ENCODE measurements at regions of chr4 and their contacts with region 1.

Region 1: DNA sequence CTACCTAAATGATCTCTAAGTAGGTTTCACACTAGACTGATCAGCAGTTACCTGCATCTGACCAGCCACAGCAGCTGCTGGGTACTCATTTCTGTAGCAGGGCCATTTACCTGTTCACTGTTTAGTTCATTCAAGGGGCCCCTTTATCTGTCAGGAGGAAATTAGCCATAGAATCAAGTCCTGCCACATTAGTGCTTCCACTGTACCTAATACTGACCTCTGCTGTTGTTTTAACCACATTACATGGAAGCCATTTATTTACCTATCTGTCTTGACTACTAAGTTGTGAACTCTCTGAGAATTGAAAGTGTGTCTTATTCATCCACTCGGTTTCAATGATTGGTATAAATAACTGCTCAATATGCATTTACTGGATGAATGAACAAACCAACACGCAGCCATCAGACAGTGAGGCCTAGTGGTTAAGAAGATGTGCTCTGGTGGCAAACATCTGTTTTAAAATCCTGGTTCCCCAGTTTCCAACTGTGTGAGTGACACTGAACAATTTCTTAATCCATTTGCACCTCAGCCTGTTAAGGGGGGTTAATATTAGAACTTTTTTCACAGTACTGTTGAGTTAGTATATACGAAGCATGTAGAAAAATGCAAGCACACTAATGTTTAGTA is 30.0 kb upstream of the ANXA5 start:
- DNase-seq: no peak
- ATAC-seq: peak; percentile 64
- H3K4me3 Mint-ChIP-seq: no peak overlapping the region
- H3K27ac Mint-ChIP-seq: no peak overlapping the region
- H3K4me1 Mint-ChIP-seq: no peaks in the 10 kb centered on the region
- H3K27me3 Mint-ChIP-seq: peaks cover 13% of the 10 kb centered on the region
- CTCF ChIP-seq: no peak

Region 2: DNA sequence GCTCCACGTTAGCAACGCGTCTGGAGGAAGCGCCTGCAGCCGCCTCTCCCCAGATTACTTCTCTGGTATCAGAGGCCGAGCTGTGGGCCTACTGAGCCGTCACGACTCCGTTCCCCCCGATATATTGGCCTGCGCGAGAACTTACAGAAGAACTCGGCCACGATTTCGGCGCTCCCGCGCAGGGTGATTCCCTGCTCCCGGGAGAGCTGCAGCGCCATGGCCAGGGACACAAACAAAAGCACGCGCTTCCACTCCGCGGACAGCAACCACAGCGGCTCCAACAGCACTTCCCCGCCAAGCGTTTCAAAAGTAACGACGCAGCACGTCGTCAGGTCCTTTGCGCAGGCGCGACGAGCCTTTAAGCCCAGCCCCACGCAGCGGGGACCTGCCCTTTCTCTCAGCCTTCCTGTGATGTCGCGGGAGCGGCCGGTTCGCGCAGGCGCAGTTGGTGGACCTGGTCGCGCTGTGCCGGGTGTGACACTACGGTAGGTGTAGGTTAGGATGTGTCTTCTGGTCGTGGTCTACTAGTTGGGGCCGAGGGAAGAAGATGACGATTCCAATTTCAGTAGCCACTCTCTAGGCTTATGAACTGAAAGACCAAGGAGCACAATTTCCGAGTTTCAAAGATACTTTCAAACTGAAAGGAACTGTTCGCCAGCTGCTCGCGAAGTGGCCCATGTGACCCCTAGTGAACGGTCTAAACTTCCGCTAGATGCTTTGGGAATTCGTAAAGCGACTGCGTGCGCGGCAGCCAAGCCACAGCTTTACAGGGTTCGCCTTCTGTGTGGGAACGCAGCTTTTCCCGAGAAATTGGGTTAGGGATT is 1660.0 kb before region 1 on chr4 and contains the start of gene MAD2L1:
- CTCF ChIA-PET with region 1: no interaction called
- POLR2A ChIA-PET with region 1: no interaction called
- intact Hi-C with region 1: loop called (anchors 10 kb)
- DNase-seq: peak; percentile 95
- ATAC-seq: peak; percentile 94
- H3K4me3 Mint-ChIP-seq: peak within 1 kb of the TSS; percentile 99
- H3K27ac Mint-ChIP-seq: peak within 1 kb of the TSS; percentile 97
- H3K4me1 Mint-ChIP-seq: peaks cover 31% of the 10 kb centered on the region
- H3K27me3 Mint-ChIP-seq: no peaks in the 10 kb centered on the region
- CTCF ChIP-seq: no peak
- total RNA-seq, gene MAD2L1: 3.4 and 5.4 TPM in 2 replicates

Region 3: GRCh38 chr4:121192480-121192879 is 534.3 kb before region 1 on chr4:
- CTCF ChIA-PET with region 1: no interaction called
- POLR2A ChIA-PET with region 1: no interaction called
- intact Hi-C with region 1: loop called (anchors 2 kb)
- DNase-seq: no peak
- ATAC-seq: peak; percentile 37
- H3K4me3 Mint-ChIP-seq: no peak overlapping the region
- H3K27ac Mint-ChIP-seq: no peak overlapping the region
- H3K4me1 Mint-ChIP-seq: peaks cover 3% of the 10 kb centered on the region
- H3K27me3 Mint-ChIP-seq: no peaks in the 10 kb centered on the region
- CTCF ChIP-seq: peak; percentile 66

Region 4: DNA sequence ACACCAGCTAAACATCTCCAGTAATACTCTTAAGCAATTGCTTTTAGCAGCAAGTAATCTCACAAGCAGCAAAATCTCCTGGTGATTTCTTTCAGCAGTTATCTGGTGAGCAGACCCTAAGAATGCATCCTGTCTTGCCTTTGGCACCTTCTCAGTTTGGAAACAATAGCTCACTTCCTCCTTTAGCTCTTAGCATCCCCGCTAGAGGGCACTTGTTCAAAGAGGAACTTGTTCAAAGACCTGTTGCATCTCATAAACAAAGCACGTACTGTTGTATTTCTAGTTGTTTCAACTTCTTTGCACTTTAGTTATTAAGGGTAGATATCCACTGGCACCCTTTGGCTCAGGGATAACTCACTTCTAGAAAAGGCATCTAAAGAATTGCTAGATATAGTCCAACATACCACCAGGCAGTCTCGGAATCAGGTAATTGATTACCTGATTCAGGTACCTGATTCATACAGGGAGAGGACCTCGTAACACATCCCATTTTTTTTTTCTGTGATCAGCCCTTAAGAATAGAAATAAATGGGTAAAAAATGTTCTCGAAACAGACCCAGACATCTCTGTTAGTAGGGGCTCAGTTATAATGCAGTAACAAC is 264.0 kb before region 1 on chr4:
- CTCF ChIA-PET with region 1: interaction called, 3 read pairs
- POLR2A ChIA-PET with region 1: no interaction called
- intact Hi-C with region 1: loop called (anchors 1 kb)
- DNase-seq: no peak
- ATAC-seq: peak; percentile 31
- H3K4me3 Mint-ChIP-seq: no peak overlapping the region
- H3K27ac Mint-ChIP-seq: no peak overlapping the region
- H3K4me1 Mint-ChIP-seq: no peaks in the 10 kb centered on the region
- H3K27me3 Mint-ChIP-seq: no peaks in the 10 kb centered on the region
- CTCF ChIP-seq: no peak

Region 5: DNA sequence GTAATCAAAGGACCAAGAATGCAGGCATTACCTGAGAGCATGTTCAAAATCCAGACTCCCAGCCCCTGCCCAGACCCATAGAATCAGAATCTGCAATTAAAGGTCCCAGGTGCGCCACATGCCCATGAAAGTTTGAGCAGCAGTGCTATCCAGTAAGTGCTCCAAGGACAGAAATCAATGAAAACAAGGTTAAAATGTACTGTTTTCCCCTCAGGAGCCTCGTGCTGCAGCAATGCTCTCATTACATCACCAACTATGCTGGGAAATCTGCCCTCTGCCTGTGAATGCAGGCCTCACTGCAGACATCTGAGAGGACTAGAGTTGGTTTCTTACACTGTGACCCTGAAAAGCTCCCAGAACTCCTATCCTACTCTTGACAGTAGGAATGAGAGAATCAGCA is 51.0 kb before region 1 on chr4:
- CTCF ChIA-PET with region 1: no interaction called
- POLR2A ChIA-PET with region 1: no interaction called
- intact Hi-C with region 1: loop called (anchors 5 kb)
- DNase-seq: no peak
- ATAC-seq: no peak
- H3K4me3 Mint-ChIP-seq: no peak overlapping the region
- H3K27ac Mint-ChIP-seq: no peak overlapping the region
- H3K4me1 Mint-ChIP-seq: no peaks in the 10 kb centered on the region
- H3K27me3 Mint-ChIP-seq: no peaks in the 10 kb centered on the region
- CTCF ChIP-seq: no peak

Measured in activated B cell treated with CpG ODN at 0.5 μM for 24 hours (primary cell).